ENCODE measurements at regions of chr20 and their contacts with region 1.

Region 1: GRCh38 chr20:31822421-31823330 is 3.5 kb downstream of the MYLK2 start:
- DNase-seq: peak; percentile 72 to 83
- H3K4me3 ChIP-seq: no peak overlapping the region
- H3K27ac ChIP-seq: no peak overlapping the region
- H3K4me1 ChIP-seq: no peaks in the 10 kb centered on the region
- H3K27me3 ChIP-seq: no peaks in the 10 kb centered on the region
- CTCF ChIP-seq: peak; percentile 98 to 99 (median 98)
- POLR2A ChIP-seq: no peak

Region 2: GRCh38 chr20:32031007-32031958 is 208.6 kb after region 1 on chr20:
- intact Hi-C with region 1: loop called (anchors 5 kb)
- DNase-seq: peak; percentile 64 to 65
- H3K4me3 ChIP-seq: no peak overlapping the region
- H3K27ac ChIP-seq: no peak overlapping the region
- H3K4me1 ChIP-seq: no peaks in the 10 kb centered on the region
- H3K27me3 ChIP-seq: peaks cover 0 to 16% of the 10 kb centered on the region in 2 donors
- CTCF ChIP-seq: peak; percentile 60 to 84 (median 66)
- POLR2A ChIP-seq: no peak

Region 3: DNA sequence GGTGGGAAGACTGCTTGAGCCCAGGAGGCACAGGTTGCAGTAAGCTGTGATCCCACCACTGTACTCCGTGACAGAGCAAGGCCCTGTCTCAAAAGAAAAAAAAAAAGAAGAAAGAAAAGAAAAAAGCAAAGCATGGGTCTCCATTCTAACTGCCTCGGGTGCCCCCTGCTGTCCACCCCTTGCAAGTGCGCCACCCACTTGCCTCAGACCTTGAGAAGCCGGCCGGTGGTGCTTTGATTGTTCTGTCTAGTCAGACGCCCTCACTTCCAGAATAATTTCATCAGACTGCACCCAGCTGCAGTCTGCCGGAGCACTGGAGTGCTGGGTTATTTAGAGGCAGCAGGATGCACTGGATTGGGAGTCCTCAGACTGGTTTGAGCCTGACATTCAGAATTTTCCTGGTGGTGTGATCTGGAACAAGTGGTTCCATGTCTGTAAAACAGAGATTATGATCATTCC is 269.2 kb after region 1 on chr20:
- intact Hi-C with region 1: loop called (anchors 5 kb)
- DNase-seq: peak; percentile 58 to 66
- H3K4me3 ChIP-seq: no peak overlapping the region
- H3K27ac ChIP-seq: no peak overlapping the region
- H3K4me1 ChIP-seq: no peaks in the 10 kb centered on the region
- H3K27me3 ChIP-seq: no peaks in the 10 kb centered on the region
- CTCF ChIP-seq: peak; percentile 54 to 75 (median 62)
- POLR2A ChIP-seq: no peak

Measured in uterus (tissue), 4 donors.